ENCODE measurements at regions of chr19 and their contacts with region 1.

Region 1: DNA sequence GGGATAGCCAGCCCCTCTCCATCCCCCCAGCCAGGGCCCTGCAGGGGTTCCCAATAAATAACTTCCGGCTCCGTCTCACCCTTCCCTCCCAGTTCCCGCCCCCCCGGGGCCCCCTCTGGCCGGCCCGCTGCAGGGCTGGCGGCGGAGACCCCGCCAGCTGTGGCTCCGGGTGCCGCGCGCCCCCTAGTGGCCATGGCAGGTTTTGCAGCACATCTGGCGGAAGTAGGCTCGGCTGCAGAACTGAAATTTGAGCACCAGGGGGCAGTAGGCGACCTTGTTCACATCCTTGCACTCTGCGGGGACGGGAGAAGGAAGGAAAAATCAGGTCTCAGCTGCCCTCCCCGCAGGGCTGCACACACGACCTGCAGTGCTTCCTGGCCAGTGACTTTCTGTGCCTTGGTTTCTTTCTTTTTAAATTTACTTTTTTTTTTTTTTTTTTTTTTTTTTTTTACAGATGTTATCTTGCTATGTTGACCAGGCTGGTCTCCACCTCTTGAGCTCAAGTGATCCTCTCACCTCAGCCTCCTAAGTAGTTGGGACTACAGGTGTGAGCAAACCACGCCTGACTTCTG is 3.6 kb upstream of the MYO1F start:
- DNase-seq: peak; percentile 86
- CTCF ChIP-seq: peak; percentile 100

Region 2: GRCh38 chr19:8412783-8413628 is 167.8 kb before region 1 on chr19 and contains the start of gene MARCHF2:
- CTCF ChIA-PET with region 1: interaction called, 35 read pairs
- POLR2A ChIA-PET with region 1: no interaction called
- DNase-seq: peak; percentile 100
- CTCF ChIP-seq: peak; percentile 55

Region 3: GRCh38 chr19:8423817-8424223 is 157.0 kb before region 1 on chr19:
- CTCF ChIA-PET with region 1: no interaction called
- POLR2A ChIA-PET with region 1: no interaction called
- DNase-seq: no peak
- CTCF ChIP-seq: no peak

Region 4: DNA sequence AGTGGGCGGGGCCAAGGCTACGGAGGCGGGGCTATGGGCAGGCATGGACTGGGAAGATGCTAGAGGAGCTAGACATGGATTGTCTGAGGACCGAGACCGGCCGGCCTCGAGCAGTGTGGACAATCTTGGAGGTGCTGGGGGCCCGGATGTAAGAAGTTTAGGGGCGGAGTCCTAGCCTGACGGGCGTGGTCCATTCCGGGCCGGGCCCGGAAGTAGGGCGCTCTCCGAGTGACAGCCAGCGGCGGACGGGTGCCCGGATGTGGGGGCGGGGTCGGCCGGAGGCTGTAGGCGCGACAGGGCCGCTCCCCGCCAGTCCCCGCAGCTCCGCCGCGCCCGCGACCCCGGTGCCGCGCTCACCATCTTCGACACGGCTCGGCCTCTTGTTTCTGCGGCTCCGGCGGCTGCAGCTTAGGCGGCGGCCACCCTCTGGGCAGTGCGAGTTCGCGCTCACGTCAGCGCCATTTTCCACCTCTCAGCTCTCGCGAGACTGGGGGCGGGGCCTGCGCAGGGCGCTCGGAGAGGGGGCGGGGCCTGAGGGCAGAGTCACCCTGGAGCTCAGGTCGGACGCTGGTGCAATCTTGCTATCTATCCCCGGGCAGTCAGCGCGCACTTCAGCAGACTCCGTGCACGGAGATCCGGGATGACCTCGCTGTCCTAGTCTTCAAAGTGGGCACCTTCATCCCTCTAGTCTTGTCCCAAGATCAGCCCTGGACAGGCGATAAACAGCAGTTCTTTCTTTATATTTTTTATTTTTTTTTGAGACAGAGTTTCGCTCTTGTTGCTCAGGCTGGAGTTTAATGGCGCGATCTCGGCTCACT is 66.9 kb before region 1 on chr19 and contains the start of gene ZNF414:
- CTCF ChIA-PET with region 1: interaction called, 23 read pairs
- POLR2A ChIA-PET with region 1: no interaction called
- DNase-seq: peak; percentile 99
- CTCF ChIP-seq: no peak

Region 5: DNA sequence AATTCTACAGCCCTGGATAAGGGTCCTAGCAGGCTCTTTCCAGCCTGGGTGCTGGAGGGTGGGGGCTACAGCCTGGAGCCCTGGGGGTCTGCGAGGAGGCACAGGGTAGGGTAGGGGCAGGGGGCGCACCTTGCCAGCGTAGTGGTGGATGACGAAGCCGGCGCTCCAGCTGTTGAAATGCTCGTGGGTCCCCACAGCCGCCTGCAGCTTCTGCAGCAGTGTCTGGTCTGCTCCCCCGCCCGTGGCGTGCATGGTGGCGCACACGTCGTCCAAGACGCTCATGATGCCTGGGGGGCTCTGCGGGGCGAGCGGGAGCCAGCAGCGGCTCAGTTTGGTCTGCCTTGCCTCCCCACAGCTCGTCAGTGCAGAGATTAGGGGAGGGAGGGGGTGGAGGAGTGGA is 36.6 kb before region 1 on chr19:
- CTCF ChIA-PET with region 1: interaction called, 30 read pairs
- POLR2A ChIA-PET with region 1: no interaction called
- DNase-seq: no peak
- CTCF ChIP-seq: no peak

Region 6: DNA sequence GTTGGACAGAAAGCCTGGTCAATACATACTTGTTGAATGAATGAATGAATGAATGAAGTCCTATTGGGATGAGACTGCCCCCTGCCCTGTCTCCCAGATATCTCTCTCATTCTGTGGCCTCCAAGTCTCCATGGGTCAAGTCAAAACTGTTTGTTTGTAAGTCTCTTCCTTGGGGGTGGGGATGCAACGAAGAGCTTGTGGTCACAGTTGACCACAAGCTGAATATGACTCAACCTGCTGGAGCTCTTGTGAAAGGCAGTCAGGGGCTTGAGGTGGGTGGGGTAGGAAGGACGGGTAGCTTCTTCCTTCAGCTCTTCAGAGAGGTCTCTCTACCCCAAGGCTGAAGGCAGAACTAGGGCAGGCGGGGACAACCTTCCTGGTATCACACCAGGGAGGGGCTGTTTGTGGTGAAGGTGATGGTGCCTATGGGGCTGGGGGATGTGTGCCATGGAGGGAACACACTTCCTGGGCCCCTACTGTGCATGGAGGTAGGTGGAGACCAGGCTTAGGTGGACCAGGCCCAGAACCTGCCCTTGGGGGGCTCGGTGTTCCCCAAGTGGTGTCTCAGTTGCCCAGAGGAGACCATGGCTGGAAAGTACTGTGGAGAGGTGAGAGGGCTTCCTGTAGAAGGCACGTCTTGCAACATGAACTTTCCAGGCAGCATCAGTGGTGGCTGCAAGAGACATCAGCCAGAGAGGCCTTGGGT is 11.6 kb before region 1 on chr19:
- CTCF ChIA-PET with region 1: interaction called, 57 read pairs
- POLR2A ChIA-PET with region 1: no interaction called
- DNase-seq: peak; percentile 86
- CTCF ChIP-seq: no peak

Region 7: DNA sequence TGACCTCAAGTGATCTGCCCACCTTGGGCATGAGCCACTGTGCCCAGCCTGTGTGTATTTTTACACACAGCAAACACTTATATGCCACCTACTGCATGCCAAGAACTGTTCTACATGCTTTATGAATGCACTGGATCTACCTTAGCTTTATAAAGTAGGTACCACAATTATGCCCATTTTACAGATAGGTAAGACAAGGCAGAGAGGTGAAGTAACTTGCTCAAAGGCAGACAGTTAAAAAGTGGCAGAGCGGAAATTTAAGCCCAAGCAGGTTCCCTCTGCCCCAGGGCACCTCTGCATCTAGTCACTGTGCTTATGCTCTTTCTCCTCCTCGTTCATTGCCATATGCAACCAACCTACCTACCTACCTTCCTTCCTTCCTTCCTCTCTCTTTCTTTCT is 19.3 kb after region 1 on chr19:
- CTCF ChIA-PET with region 1: interaction called, 59 read pairs
- POLR2A ChIA-PET with region 1: no interaction called
- DNase-seq: no peak
- CTCF ChIP-seq: no peak